ENCODE measurements at regions of chr9 and their contacts with region 1.

Region 1: DNA sequence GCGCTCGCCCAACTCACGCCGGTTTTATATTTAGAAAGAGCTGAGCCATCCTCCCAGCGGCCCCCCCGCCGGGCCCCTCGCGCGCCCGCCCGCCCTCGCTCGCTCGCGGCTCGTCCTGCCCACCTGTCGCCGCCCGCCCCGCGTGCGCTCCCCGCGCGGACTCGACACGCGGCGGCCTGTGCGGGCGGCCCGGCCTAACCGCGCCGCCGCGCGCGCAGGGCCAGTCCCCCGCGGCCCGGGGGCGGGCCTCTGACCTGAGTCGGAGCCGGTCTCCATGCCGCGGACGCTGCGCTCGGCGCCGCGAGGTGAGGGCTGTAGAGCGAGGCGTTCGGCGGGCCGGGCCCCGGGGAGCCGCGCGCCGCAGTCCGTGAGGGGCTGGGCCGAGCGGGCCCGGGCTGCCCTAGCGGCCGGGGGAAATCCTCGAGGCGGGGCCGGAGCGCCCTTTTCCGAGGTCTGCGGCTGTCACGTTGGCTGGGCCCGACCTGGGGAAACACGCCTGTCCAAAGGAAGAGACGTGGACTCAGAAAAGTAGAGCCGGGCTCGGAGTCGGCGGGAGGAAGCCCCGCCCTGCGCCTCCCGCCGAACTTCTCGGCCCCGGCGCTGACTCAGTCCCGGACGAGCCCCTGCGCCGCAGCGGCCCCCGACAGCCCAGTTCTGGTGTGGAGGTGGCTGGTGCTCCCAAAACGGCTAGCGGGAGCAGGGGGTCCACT is at the start of gene ECPAS:
- DNase-seq: peak; percentile 85
- H3K4me3 ChIP-seq: peak within 1 kb of the TSS; percentile 95 to 100 (median 96)
- H3K27ac ChIP-seq: peak within 1 kb of the TSS; percentile 92
- H3K4me1 ChIP-seq: peaks cover 6% of the 10 kb centered on the region
- H3K27me3 ChIP-seq: no peaks in the 10 kb centered on the region
- CTCF ChIP-seq: no peak
- total RNA-seq, gene ECPAS: 87.2 to 96.3 TPM

Region 2: DNA sequence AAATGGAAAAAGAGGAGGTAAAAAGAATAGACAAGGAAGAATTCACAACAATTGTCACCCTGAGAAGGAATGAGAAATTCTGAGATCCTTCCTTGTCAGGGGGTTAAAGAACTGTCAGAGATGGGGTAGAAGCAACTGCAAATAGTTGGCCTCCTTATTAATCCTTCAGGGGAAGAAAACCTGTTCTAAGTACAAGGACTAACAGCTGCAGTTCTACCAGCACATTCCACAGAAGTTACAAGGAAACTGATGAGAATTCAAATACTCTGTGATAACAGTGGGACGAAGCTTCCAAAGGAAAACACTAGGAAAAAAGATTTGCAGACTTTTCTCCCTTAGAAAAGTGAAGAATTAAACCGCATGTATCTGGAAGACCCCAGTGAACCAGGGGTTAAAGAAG is 247.7 kb before region 1 on chr9:
- CTCF ChIA-PET with region 1: no interaction called
- dilution Hi-C with region 1: no loop called
- in situ Hi-C with region 1: no loop called
- intact Hi-C with region 1: no loop called
- DNase-seq: no peak
- H3K4me3 ChIP-seq: no peak overlapping the region
- H3K27ac ChIP-seq: no peak overlapping the region
- H3K4me1 ChIP-seq: no peaks in the 10 kb centered on the region
- H3K27me3 ChIP-seq: no peaks in the 10 kb centered on the region
- CTCF ChIP-seq: no peak

Region 3: GRCh38 chr9:111525056-111525977 is 41.3 kb after region 1 on chr9 and contains the start of gene ZNF483:
- CTCF ChIA-PET with region 1: no interaction called
- dilution Hi-C with region 1: no loop called
- in situ Hi-C with region 1: no loop called
- intact Hi-C with region 1: loop called (anchors 1 kb)
- DNase-seq: peak; percentile 85
- H3K4me3 ChIP-seq: peak within 1 kb of the TSS; percentile 55 to 71 (median 68)
- H3K27ac ChIP-seq: peak within 1 kb of the TSS; percentile 56
- H3K4me1 ChIP-seq: peaks cover 8% of the 10 kb centered on the region
- H3K27me3 ChIP-seq: no peaks in the 10 kb centered on the region
- CTCF ChIP-seq: no peak
- total RNA-seq, gene ZNF483: 2.1 to 5.7 TPM